Activated CD4-positive, alpha-beta memory T cell treated with anti-CD3 and anti-CD28 coated beads for 36 hours (primary cell): ENCODE measurements at regions of chr2 and their contacts with region 1.

Region 1: GRCh38 chr2:135004005-135004746 is 43.1 kb downstream of the MAP3K19 start:
- DNase-seq: peak; percentile 82
- H3K4me3 Mint-ChIP-seq: no peak overlapping the region
- H3K27ac Mint-ChIP-seq: no peak overlapping the region
- H3K4me1 Mint-ChIP-seq: peaks cover 4% of the 10 kb centered on the region
- H3K27me3 Mint-ChIP-seq: peaks cover 25% of the 10 kb centered on the region

Region 2: DNA sequence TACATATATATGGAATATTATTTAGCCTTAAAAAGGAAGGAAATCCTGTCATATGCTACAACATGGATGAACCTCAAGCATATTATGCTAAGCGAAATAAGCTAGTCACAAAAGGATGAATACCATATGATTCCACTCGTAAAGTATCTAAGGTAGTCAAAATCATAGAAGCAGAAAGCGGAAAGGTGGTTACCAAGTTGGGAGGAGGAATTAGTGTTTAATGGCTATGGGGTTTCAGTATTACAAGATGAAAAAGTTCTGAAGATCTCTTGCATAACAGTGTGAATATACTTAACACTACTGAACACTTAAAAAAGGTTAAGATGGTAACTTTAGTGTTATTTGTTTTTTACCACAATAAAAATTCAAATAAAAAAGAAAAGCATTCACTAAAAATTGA is 651.3 kb before region 1 on chr2:
- CTCF ChIA-PET with region 1: no interaction called
- POLR2A ChIA-PET with region 1: no interaction called
- intact Hi-C with region 1: no loop called
- DNase-seq: no peak
- H3K4me3 Mint-ChIP-seq: no peak overlapping the region
- H3K27ac Mint-ChIP-seq: no peak overlapping the region
- H3K4me1 Mint-ChIP-seq: no peaks in the 10 kb centered on the region
- H3K27me3 Mint-ChIP-seq: no peaks in the 10 kb centered on the region

Region 3: DNA sequence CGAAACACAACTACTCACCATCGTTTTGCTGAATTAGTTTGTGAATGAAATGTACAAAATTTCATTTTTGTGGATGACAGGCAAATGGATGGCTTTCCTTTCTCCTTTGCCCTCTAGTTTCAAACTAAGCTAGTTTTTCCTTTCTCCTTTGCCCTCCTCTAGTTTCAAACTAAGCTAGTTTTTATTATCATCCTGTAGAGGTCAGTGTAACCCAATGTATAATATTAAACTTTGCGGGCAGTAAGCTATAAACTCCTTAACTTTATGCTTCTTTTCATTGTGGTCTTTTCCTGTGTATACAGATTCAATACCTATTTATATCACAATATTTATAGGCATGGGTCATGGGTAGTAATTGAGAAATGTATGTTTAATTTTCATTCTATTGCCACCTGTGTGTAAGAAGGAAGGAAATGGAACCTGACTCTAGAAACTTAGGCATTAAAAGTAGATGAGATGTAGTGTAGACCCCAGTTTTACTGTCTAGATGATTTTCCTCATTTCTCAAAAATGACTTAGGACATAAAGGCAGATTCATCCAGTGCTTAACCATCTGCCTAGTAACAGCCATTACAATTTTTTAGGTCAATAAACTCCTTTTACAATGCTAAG is 15.1 kb before region 1 on chr2:
- CTCF ChIA-PET with region 1: interaction called, 17 read pairs
- POLR2A ChIA-PET with region 1: no interaction called
- intact Hi-C with region 1: no loop called
- DNase-seq: no peak
- H3K4me3 Mint-ChIP-seq: no peak overlapping the region
- H3K27ac Mint-ChIP-seq: no peak overlapping the region
- H3K4me1 Mint-ChIP-seq: no peaks in the 10 kb centered on the region
- H3K27me3 Mint-ChIP-seq: peaks cover 2% of the 10 kb centered on the region

Region 4: GRCh38 chr2:135043345-135043744 is 39.2 kb after region 1 on chr2:
- CTCF ChIA-PET with region 1: interaction called, 32 read pairs
- POLR2A ChIA-PET with region 1: no interaction called
- intact Hi-C with region 1: loop called (anchors 2 kb)
- DNase-seq: peak; percentile 52
- H3K4me3 Mint-ChIP-seq: no peak overlapping the region
- H3K27ac Mint-ChIP-seq: no peak overlapping the region
- H3K4me1 Mint-ChIP-seq: no peaks in the 10 kb centered on the region
- H3K27me3 Mint-ChIP-seq: peaks cover 1% of the 10 kb centered on the region

Region 5: DNA sequence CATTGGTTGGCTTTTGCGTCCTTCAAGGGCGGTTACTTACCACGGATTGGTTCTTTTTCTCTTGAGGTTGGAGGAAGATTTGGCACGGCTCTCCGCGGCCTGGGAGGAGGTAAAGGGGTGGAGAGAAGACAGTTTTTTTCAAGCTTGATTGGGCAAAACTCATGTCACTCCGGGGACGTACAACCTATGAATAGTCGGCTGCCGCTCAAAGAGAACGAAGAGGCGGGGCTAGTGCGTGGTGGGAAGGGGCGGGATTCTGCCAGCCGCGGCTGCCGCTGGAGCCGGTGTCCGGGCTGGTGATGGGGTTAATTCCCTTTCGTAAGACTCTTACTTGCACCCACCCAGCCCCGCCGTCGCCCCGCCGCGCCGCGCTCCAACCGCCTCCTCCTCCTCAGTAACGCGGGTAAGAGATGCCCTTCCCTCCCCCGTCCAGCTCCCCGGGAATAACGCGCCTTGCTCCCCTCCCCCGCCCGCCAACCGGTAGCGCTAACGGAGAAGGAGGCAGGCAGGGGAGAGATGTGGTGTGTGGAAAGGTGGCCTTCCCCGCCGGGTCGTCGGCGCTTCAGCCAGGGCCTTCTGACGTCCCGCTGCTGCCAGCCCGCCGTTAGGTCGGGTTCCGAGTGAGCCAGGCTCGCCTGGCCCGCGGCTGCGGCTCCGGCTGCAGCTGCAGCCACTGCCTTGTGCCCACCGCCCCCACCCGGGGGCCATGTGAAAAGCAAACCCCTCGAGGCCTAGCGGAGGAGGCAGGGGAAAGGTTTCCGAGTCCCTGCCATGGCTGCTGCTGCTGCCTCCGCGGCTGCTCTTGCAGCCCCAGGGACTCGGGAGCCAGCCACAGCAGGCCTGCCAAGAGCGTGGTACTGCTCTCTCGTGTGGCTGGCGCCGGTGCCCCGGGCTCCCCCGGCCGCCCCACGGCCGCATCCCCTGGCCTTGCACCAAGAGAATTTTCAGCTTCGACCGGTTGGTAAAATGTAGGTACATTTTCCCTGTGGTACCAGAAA is 527.4 kb after region 1 on chr2 and contains the start of gene R3HDM1:
- CTCF ChIA-PET with region 1: interaction called, 6 read pairs
- POLR2A ChIA-PET with region 1: no interaction called
- intact Hi-C with region 1: loop called (anchors 2 kb)
- DNase-seq: peak; percentile 97
- H3K4me3 Mint-ChIP-seq: no peak within 1 kb of the TSS
- H3K27ac Mint-ChIP-seq: peak within 1 kb of the TSS; percentile 71
- H3K4me1 Mint-ChIP-seq: peaks cover 29% of the 10 kb centered on the region
- H3K27me3 Mint-ChIP-seq: no peaks in the 10 kb centered on the region
- total RNA-seq, gene R3HDM1: 49.3 to 56.3 TPM

Region 6: GRCh38 chr2:135709992-135710391 is 705.8 kb after region 1 on chr2:
- CTCF ChIA-PET with region 1: interaction called, 60 read pairs
- POLR2A ChIA-PET with region 1: no interaction called
- intact Hi-C with region 1: loop called (anchors 1 kb)
- DNase-seq: peak; percentile 79
- H3K4me3 Mint-ChIP-seq: no peak overlapping the region
- H3K27ac Mint-ChIP-seq: no peak overlapping the region
- H3K4me1 Mint-ChIP-seq: no peaks in the 10 kb centered on the region
- H3K27me3 Mint-ChIP-seq: no peaks in the 10 kb centered on the region